Activated T-helper 2 cell treated with anti-CD3 and anti-CD28 coated beads, Interferon-gamma antibody, Interleukin-2, Interleukin-4, amounts not matched to agents 10 μg/mL and 5 μg/mL and 100 μg/mL, durations not matched to agents 14 hours and 24 hours and 36 hours (primary cell): ENCODE measurements at regions of chr6 and their contacts with region 1.

Region 1: DNA sequence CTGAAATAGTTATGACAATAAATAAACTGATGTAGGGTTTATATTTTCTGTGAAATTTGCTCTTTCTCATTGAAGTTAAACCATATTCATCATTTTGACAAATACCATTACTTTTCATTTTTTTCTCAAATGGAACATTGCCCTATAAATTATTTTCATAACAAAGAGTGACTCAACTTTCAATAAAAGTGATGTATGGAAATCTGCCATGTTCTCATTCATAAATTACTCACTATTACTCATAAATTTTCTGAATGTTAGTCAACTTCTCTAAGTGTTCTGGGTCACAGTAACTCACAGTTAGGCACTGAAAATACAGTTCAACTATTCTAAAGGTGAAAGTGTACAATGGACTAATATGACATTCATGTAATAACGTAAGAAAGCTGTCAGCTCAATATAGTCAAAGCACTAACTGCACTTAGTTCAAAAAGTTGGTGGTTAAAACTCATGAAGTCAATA is 19.0 kb upstream of the STX11 start:
- DNase-seq: no peak
- H3K4me3 Mint-ChIP-seq: peak overlapping the region; percentile 19
- H3K27ac Mint-ChIP-seq: peak overlapping the region; percentile 84
- H3K4me1 Mint-ChIP-seq: peaks cover 29% of the 10 kb centered on the region
- H3K27me3 Mint-ChIP-seq: peaks cover 4% of the 10 kb centered on the region

Region 2: DNA sequence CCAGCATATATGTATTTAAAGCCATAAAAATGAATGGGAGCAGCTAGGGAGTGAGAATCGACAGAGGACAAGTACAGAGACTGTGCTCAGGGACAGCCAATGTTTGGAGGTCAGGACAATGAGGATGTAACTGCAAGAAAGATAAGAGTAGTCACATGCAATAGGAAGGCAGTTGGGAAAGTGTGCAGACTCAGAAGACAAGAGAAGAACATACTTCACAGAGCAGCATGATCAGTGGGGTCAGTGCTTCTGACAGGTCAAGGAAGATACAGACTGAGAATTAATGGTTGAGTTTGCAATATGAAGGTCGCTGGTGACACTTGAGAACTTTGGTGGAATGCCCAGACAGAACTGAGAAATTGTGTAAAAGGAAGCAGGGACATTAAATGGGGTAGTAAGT is 148.3 kb before region 1 on chr6:
- intact Hi-C with region 1: no loop called
- DNase-seq: no peak
- H3K4me3 Mint-ChIP-seq: no peak overlapping the region
- H3K27ac Mint-ChIP-seq: no peak overlapping the region
- H3K4me1 Mint-ChIP-seq: no peaks in the 10 kb centered on the region
- H3K27me3 Mint-ChIP-seq: peaks cover 6% of the 10 kb centered on the region

Region 3: GRCh38 chr6:144055121-144055931 is 76.0 kb before region 1 on chr6:
- intact Hi-C with region 1: loop called (anchors 2 kb)
- DNase-seq: peak; percentile 36
- H3K4me3 Mint-ChIP-seq: peak overlapping the region; percentile 75
- H3K27ac Mint-ChIP-seq: peak overlapping the region; percentile 94
- H3K4me1 Mint-ChIP-seq: peaks cover 40% of the 10 kb centered on the region
- H3K27me3 Mint-ChIP-seq: no peaks in the 10 kb centered on the region

Region 4: DNA sequence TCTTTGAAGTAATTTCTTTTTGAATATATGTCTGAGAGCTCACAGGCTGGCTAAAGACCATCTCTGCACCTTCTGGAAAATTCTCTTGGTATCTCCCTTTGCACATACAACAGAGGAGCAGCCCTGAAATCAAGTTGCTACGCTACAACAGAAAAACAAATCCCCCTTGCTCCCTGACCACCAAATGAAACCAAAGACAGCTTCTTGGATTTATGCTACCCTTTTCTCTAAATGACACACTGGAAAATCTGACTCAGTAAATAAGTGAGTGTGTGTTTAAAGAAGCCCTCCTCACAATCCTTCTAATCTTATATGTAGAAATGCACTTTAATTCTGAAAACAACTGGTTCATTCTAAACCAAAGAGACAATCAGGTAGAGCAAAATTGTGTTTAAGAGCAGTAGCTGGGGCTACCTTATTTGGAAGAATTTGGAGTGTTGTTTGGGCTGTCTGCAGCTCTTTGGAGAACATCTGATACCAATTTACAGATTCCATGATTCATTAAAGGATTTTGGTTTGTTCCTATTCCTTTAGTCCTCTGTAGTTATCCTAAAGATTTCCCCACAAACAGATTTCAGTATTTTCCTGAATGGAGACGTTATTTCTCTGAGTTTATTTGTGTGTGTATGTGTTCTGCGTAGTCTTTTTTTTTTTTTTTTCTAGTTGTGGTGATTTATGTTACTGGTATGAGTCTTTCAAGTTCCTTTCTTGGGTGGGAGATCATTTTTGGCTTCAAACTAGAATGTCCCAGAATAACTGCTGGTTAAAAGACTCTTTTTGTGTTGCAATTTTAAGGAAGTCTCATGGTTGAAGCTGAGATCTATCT is 117.4 kb after region 1 on chr6:
- intact Hi-C with region 1: no loop called
- DNase-seq: no peak
- H3K4me3 Mint-ChIP-seq: no peak overlapping the region
- H3K27ac Mint-ChIP-seq: peak overlapping the region; percentile 9
- H3K4me1 Mint-ChIP-seq: peaks cover 19% of the 10 kb centered on the region
- H3K27me3 Mint-ChIP-seq: peaks cover 12% of the 10 kb centered on the region